CD4-positive, alpha-beta memory T cell (primary cell): ENCODE measurements at regions of chr3 and their contacts with region 1.

Region 1: DNA sequence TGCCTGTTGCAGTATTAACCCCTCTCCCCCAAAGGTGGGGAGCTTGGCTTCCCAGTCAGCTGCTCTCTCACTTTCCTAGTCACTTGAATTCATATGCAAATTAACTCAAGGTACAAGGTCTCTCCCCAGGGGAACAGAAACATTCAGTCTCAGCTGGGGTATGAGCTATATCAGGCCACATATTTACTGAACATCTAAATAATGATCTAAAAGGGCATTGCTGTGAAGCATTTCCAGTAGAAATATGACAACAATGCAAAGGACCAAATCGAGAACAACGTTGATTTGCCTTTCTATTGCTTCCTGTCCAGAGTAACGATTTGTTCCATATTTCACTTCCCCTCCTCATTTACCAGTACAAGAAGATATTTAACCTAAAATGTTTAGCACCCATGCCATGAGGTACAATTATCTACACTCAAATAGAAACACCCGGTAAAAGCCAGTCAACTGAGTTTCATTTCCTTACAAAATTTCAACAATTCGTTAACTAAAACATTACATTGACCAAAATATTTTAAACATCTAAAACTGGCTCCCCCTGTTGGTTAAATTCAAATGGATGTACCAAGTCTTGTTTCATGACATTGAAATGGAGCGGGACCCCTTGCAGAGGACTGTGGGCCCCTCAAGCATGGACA is 36.5 kb upstream of the KLHL6 start:
- DNase-seq: peak in 4 of 5 donors; percentile 32 to 41 (median 38)
- H3K4me3 ChIP-seq: no peak overlapping the region
- H3K4me3 Mint-ChIP-seq: peak overlapping the region; percentile 56 to 88 (median 82)
- H3K27ac ChIP-seq: no peak overlapping the region
- H3K27ac Mint-ChIP-seq: peak overlapping the region; percentile 49 to 92 (median 78)
- H3K4me1 ChIP-seq: peaks cover 43% of the 10 kb centered on the region
- H3K4me1 Mint-ChIP-seq: peaks cover 23 to 46% (median 34%) of the 10 kb centered on the region in 4 donors
- H3K27me3 ChIP-seq: no peaks in the 10 kb centered on the region
- H3K27me3 Mint-ChIP-seq: no peaks in the 10 kb centered on the region

Region 2: GRCh38 chr3:183468424-183468823 is 123.6 kb before region 1 on chr3:
- CTCF ChIA-PET with region 1: interaction called, 59 read pairs
- POLR2A ChIA-PET with region 1: no interaction called
- intact Hi-C with region 1: loop called (anchors 1 kb)
- DNase-seq: no peak
- H3K4me3 ChIP-seq: no peak overlapping the region
- H3K4me3 Mint-ChIP-seq: no peak overlapping the region
- H3K27ac ChIP-seq: no peak overlapping the region
- H3K27ac Mint-ChIP-seq: no peak overlapping the region
- H3K4me1 ChIP-seq: peaks cover 7% of the 10 kb centered on the region
- H3K4me1 Mint-ChIP-seq: peaks cover 2 to 6% (median 6%) of the 10 kb centered on the region in 4 donors
- H3K27me3 ChIP-seq: no peaks in the 10 kb centered on the region
- H3K27me3 Mint-ChIP-seq: no peaks in the 10 kb centered on the region

Region 3: DNA sequence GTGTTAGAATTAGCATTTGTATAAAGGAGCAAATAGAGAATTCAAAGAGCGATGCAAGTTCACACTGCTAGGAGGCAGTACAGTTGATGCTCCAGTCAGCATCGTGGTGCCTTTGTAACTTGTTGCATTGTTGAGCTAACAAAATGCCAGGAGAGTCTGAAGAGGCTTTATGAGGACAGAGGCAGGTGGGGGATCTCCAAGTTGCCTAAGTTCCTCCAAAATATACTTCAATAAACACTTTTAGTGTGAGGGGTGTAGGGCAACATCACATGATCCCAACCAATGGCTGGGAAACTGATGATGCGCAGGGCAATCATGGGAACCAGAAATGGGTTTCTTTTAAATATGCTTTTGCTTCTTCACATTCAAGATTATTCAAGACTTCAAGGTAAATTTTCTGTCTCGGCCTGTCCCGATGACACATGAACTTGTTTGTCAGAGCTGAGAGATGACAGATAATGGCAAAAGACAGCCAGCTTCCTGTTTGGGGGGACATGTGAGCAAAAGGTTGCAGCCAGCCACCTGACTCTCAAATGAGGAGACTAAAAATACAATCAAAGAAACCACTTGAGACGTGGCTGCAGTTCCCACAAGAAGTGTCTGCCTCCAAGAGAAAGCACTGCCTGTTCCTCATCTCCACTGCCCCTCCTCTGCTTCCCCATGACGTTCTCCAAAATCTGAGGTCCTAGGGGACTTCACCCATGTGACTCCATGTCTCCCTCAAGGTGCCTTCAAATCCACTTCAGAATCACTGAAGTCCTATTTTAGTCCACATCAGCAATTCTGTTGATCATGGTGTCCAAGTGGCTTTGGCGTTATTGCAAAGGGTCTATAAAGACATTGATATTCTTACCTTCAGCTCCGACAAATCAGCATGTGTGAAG is 75.8 kb before region 1 on chr3:
- CTCF ChIA-PET with region 1: interaction called, 8 read pairs
- POLR2A ChIA-PET with region 1: interaction called, 7 read pairs
- intact Hi-C with region 1: loop called (anchors 1 kb)
- DNase-seq: peak; percentile 64 to 91 (median 68)
- H3K4me3 ChIP-seq: no peak overlapping the region
- H3K4me3 Mint-ChIP-seq: peak overlapping the region; percentile 7 to 70 (median 57)
- H3K27ac ChIP-seq: peak overlapping the region; percentile 42
- H3K27ac Mint-ChIP-seq: peak overlapping the region; percentile 90 to 95 (median 92)
- H3K4me1 ChIP-seq: peaks cover 66% of the 10 kb centered on the region
- H3K4me1 Mint-ChIP-seq: peaks cover 58 to 80% (median 71%) of the 10 kb centered on the region in 4 donors
- H3K27me3 ChIP-seq: no peaks in the 10 kb centered on the region
- H3K27me3 Mint-ChIP-seq: no peaks in the 10 kb centered on the region

Region 4: GRCh38 chr3:183564046-183564445 is 28.0 kb before region 1 on chr3:
- CTCF ChIA-PET with region 1: no interaction called
- POLR2A ChIA-PET with region 1: no interaction called
- intact Hi-C with region 1: no loop called
- DNase-seq: no peak
- H3K4me3 ChIP-seq: no peak overlapping the region
- H3K4me3 Mint-ChIP-seq: no peak overlapping the region
- H3K27ac ChIP-seq: no peak overlapping the region
- H3K27ac Mint-ChIP-seq: no peak overlapping the region
- H3K4me1 ChIP-seq: peaks cover 8% of the 10 kb centered on the region
- H3K4me1 Mint-ChIP-seq: peaks cover 5 to 7% (median 6%) of the 10 kb centered on the region in 4 donors
- H3K27me3 ChIP-seq: no peaks in the 10 kb centered on the region
- H3K27me3 Mint-ChIP-seq: no peaks in the 10 kb centered on the region

Region 5: DNA sequence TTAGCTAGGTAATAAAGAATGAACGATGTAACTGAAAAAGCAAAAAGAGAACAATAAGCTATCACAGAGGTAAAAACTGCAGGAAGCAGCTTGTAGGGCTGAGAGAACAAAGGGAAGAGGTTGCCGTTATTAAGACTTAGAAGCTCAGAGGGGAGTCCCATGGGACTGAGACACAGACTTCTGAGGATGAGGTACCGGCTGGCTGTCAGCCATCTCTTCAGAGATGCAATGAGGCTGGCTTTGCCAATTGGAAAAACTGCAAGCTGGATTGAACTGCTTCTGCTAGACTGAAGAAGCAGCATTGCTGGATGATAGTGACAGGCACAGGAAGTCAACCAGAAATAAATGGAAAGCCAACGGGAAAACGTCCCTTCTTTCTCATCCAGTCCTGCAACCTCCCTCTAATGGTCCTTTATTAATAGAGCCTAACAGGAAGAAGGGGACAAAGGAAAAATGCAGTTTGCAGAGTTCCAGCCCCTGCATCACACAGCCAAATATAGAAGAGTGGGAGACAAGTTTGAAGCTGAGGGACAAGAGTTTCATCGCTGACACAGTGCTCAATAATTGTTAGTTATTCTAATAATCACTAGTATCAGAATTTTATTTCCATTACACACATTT is 15.4 kb before region 1 on chr3:
- CTCF ChIA-PET with region 1: interaction called, 55 read pairs
- POLR2A ChIA-PET with region 1: interaction called, 4 read pairs
- intact Hi-C with region 1: no loop called
- DNase-seq: no peak
- H3K4me3 ChIP-seq: no peak overlapping the region
- H3K4me3 Mint-ChIP-seq: peak overlapping the region in 2 of 8 donors; percentile 14 to 45
- H3K27ac ChIP-seq: no peak overlapping the region
- H3K27ac Mint-ChIP-seq: peak overlapping the region in 2 of 7 donors; percentile 36 to 75
- H3K4me1 ChIP-seq: peaks cover 17% of the 10 kb centered on the region
- H3K4me1 Mint-ChIP-seq: peaks cover 17 to 35% (median 27%) of the 10 kb centered on the region in 4 donors
- H3K27me3 ChIP-seq: no peaks in the 10 kb centered on the region
- H3K27me3 Mint-ChIP-seq: no peaks in the 10 kb centered on the region

Region 6: DNA sequence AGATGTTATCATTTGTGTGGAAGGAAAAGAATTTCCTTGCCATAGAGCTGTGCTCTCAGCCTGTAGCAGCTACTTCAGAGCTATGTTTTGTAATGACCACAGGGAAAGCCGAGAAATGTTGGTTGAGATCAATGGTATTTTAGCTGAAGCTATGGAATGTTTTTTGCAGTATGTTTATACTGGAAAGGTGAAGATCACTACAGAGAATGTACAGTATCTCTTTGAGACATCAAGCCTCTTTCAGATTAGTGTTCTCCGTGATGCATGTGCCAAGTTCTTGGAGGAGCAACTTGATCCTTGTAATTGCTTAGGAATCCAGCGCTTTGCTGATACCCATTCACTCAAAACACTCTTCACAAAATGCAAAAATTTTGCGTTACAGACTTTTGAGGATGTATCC is 58.6 kb after region 1 on chr3:
- CTCF ChIA-PET with region 1: no interaction called
- POLR2A ChIA-PET with region 1: no interaction called
- intact Hi-C with region 1: no loop called
- DNase-seq: no peak
- H3K4me3 ChIP-seq: no peak overlapping the region
- H3K4me3 Mint-ChIP-seq: peak overlapping the region in 1 of 8 donors; percentile 4
- H3K27ac ChIP-seq: no peak overlapping the region
- H3K27ac Mint-ChIP-seq: no peak overlapping the region
- H3K4me1 ChIP-seq: no peaks in the 10 kb centered on the region
- H3K4me1 Mint-ChIP-seq: peaks cover 0 to 8% (median 5%) of the 10 kb centered on the region in 4 donors
- H3K27me3 ChIP-seq: no peaks in the 10 kb centered on the region
- H3K27me3 Mint-ChIP-seq: no peaks in the 10 kb centered on the region